ENCODE measurements at regions of chr6 and their contacts with region 1.

Region 1: DNA sequence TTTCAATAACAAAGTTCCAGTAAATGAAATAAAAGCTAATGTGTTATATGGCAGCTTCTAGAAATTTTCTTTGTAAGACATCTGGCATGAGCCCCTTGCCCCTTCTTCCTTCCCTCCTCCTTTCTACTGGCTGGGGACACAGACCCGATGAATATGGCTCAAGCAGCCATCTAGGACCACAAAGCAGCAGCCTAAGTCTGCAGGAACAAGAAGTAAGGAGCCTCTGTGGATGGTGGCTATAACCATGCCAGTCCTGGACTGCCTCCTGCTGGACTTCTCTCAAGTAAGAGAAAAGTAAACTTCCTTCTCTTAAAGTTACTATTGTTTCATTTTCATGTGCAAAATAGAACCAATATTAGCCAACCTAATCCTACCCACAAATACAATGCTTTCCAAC is 114.9 kb upstream of the DST start:
- DNase-seq: peak; percentile 64
- H3K4me3 ChIP-seq: no peak overlapping the region
- H3K27ac ChIP-seq: no peak overlapping the region
- H3K4me1 ChIP-seq: peaks cover 34% of the 10 kb centered on the region
- H3K27me3 ChIP-seq: no peaks in the 10 kb centered on the region
- CTCF ChIP-seq: peak; percentile 65

Region 2: DNA sequence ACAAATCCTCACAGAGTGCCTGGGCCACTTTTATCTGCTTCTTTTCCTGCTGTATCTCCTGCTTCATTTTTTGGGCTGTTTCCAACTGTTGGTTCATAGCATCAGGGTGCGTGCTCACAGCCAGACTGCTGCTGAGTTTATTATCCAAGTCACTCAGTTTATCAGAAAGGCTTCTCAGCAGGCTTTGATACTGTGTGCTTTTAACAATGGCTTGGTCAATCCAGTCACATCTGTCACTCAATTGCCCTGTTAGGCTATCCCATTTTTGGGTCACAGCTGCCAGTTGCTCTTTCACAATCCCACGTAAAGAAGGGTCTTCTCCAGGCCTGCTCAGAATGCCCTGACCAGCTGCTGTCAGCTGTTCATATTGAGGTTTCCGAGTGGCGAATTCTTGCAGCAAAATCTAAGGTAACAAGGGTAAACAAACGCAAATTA is 202.1 kb before region 1 on chr6:
- CTCF ChIA-PET with region 1: no interaction called
- POLR2A ChIA-PET with region 1: no interaction called
- intact Hi-C with region 1: no loop called
- DNase-seq: peak; percentile 32
- H3K4me3 ChIP-seq: no peak overlapping the region
- H3K27ac ChIP-seq: no peak overlapping the region
- H3K4me1 ChIP-seq: peaks cover 6% of the 10 kb centered on the region
- H3K27me3 ChIP-seq: no peaks in the 10 kb centered on the region
- CTCF ChIP-seq: no peak

Region 3: GRCh38 chr6:56708810-56709597 is 48.6 kb before region 1 on chr6:
- CTCF ChIA-PET with region 1: interaction called, 4 read pairs
- POLR2A ChIA-PET with region 1: no interaction called
- intact Hi-C with region 1: loop called (anchors 2 kb)
- DNase-seq: peak; percentile 80
- H3K4me3 ChIP-seq: no peak overlapping the region
- H3K27ac ChIP-seq: no peak overlapping the region
- H3K4me1 ChIP-seq: peaks cover 13% of the 10 kb centered on the region
- H3K27me3 ChIP-seq: no peaks in the 10 kb centered on the region
- CTCF ChIP-seq: peak; percentile 84

Region 4: DNA sequence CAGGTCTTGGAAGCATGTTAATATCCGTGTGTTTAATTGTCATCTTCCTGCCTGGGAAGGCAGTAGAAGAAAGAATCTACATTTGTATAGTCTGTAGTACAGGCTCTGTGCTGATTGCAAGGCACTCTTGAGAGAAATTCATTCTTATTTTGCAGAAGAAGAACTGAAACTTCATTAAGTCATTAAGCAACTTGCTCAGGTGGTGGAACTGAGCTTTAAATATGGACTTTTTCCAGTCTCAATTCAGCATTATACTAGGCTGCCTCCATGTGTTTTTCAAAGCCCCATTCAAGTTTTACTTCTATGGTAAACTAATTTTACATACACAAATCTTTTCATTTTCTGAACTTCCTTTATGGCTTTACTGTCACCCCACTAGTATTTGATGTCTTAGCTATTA is 351.1 kb after region 1 on chr6:
- CTCF ChIA-PET with region 1: no interaction called
- POLR2A ChIA-PET with region 1: no interaction called
- intact Hi-C with region 1: no loop called
- DNase-seq: no peak
- H3K4me3 ChIP-seq: no peak overlapping the region
- H3K27ac ChIP-seq: no peak overlapping the region
- H3K4me1 ChIP-seq: no peaks in the 10 kb centered on the region
- H3K27me3 ChIP-seq: no peaks in the 10 kb centered on the region
- CTCF ChIP-seq: no peak